RWPE1 (cell line): ENCODE measurements at regions of chr19 and their contacts with region 1.

Region 1: GRCh38 chr19:49255674-49256073 is 69.3 kb downstream of the SLC6A16 start:
- DNase-seq: no peak
- H3K27ac ChIP-seq: no peak overlapping the region
- CTCF ChIP-seq: no peak

Region 2: GRCh38 chr19:49057636-49058234 is 197.9 kb before region 1 on chr19 and contains the start of gene CGB7:
- CTCF ChIA-PET with region 1: no interaction called
- POLR2A ChIA-PET with region 1: interaction called, 11 read pairs
- DNase-seq: peak; percentile 83
- H3K27ac ChIP-seq: peak within 1 kb of the TSS; percentile 78
- CTCF ChIP-seq: no peak

Region 3: DNA sequence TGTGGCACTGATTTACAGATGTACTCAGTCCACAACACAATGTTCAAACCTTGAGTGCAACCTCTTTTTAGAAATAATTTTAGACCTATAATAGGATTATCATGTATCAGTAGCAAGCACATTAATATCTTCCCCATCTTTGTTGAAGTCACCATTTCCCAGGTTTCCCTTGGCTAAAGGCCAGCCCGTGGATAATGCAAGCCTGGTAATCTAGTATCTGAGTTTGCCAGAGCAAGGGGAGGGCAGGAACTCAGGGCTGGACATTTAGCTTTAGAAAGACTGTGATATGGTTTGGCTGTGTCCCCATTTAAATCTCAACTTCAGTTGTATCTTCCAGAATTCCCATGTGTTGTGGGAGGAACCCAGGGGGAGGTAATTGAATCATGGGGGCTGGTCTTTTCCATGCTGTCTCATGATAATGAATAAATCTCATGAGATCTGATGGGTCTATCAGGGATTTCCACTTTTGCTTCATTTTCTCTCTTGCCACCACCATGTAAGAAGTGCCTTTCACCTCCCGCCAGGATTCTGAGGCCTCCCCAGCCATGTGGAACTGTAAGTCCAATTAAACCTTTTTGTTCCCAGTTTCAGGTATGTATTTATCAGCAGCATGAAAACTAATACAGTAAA is 31.6 kb after region 1 on chr19:
- CTCF ChIA-PET with region 1: no interaction called
- POLR2A ChIA-PET with region 1: no interaction called
- DNase-seq: no peak
- H3K27ac ChIP-seq: no peak overlapping the region
- CTCF ChIP-seq: no peak